CD4-positive, alpha-beta T cell (primary cell): ENCODE measurements at regions of chr10 and their contacts with region 1.

Region 1: GRCh38 chr10:101782811-101783735 is at the start of gene NPM3:
- DNase-seq: peak; percentile 61 to 87 (median 76)
- ATAC-seq: peak; percentile 81
- H3K4me3 ChIP-seq: peak within 1 kb of the TSS; percentile 90
- H3K4me3 Mint-ChIP-seq: peak within 1 kb of the TSS; percentile 100
- H3K27ac ChIP-seq: peak within 1 kb of the TSS; percentile 62 to 64
- H3K27ac Mint-ChIP-seq: peak within 1 kb of the TSS; percentile 86
- H3K4me1 ChIP-seq: peaks cover 62% of the 10 kb centered on the region
- H3K4me1 Mint-ChIP-seq: peaks cover 71% of the 10 kb centered on the region
- H3K27me3 ChIP-seq: peaks cover 15 to 16% of the 10 kb centered on the region in 2 experiments
- H3K27me3 Mint-ChIP-seq: peaks cover 11% of the 10 kb centered on the region
- CTCF ChIP-seq: no peak
- total RNA-seq, gene NPM3: 15.5 to 15.8 TPM

Region 2: GRCh38 chr10:101602761-101603398 is 180.2 kb before region 1 on chr10:
- CTCF ChIA-PET with region 1: interaction called, 3 read pairs
- POLR2A ChIA-PET with region 1: no interaction called
- intact Hi-C with region 1: loop called (anchors 2 kb)
- DNase-seq: peak; percentile 12 to 72 (median 48)
- ATAC-seq: peak; percentile 84
- H3K4me3 ChIP-seq: no peak overlapping the region
- H3K4me3 Mint-ChIP-seq: no peak overlapping the region
- H3K27ac ChIP-seq: no peak overlapping the region
- H3K27ac Mint-ChIP-seq: no peak overlapping the region
- H3K4me1 ChIP-seq: no peaks in the 10 kb centered on the region
- H3K4me1 Mint-ChIP-seq: no peaks in the 10 kb centered on the region
- H3K27me3 ChIP-seq: no peaks in the 10 kb centered on the region
- H3K27me3 Mint-ChIP-seq: no peaks in the 10 kb centered on the region
- CTCF ChIP-seq: peak; percentile 66

Region 3: DNA sequence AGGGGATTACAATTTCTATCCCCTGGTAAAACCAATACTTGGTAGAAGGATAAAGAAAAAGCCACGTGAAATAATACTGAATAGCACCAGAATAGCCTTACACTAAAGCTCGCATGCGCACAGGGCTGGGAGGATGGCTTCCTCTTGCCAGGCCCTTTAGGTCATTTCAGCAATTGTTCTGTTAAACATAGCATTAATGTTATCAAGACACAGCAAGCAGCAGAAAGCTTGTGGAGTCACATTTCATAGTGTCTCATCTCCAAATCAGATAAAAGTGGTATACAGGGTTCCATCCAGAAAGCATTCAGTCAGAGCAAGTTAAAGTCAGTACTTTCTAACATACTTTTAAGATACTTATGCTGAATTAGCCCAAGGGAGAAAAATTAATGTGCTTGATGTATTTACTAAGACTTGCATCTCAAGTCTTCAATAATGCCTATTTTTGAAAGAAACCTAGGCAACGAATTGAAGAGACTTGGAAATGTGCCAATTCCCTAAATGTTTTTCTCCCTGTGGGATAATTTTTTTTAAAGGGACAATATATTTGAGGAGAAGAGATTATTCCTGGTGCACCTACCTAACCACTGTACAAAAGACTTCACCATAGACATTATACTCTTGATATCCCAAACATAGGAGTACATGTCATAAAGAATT is 14.5 kb after region 1 on chr10:
- CTCF ChIA-PET with region 1: interaction called, 7 read pairs
- POLR2A ChIA-PET with region 1: interaction called, 20 read pairs
- intact Hi-C with region 1: no loop called
- DNase-seq: no peak
- ATAC-seq: no peak
- H3K4me3 ChIP-seq: no peak overlapping the region
- H3K4me3 Mint-ChIP-seq: no peak overlapping the region
- H3K27ac ChIP-seq: no peak overlapping the region
- H3K27ac Mint-ChIP-seq: peak overlapping the region; percentile 10
- H3K4me1 ChIP-seq: no peaks in the 10 kb centered on the region
- H3K4me1 Mint-ChIP-seq: peaks cover 52% of the 10 kb centered on the region
- H3K27me3 ChIP-seq: no peaks in the 10 kb centered on the region
- H3K27me3 Mint-ChIP-seq: no peaks in the 10 kb centered on the region
- CTCF ChIP-seq: no peak

Region 4: DNA sequence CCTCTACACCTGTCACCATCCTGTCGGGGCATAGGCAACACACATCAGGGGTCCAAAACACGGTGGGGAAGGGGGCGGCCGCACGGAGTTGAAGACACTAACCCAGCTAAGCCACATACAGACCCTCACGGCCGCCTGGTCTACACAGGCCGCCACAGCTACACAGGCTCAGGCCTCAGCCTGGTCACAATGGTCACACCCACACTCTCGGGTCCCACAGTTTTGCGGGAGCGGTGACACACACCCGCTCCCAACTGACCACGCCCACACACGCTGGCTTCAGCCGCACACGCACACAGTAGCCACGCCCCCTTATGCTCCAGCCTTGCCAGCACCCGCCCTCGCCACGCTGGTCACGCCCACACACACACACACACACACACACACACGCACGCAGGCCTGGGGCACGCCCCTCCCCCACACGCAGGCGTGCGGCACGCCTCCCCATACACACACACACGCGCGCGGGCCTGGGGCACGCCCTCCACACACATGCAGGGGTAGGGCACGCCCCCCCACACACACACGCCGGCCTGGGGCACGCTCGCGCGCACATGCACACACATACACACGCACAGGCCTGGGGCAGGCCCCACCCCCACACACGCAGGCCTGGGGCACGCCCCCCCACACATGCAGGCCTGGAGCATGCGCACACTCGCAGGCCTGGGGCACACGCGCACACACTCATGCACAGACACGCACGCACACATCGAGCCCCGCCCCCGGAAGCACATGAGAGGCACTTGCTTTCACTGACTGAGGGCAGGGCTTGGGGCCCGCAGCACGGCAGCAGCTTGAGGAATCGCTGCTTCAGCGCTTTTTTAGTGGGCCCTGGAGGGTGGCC is 47.5 kb after region 1 on chr10:
- CTCF ChIA-PET with region 1: interaction called, 3 read pairs
- POLR2A ChIA-PET with region 1: interaction called, 3 read pairs
- intact Hi-C with region 1: loop called (anchors 5 kb)
- DNase-seq: peak; percentile 91 to 99 (median 94)
- ATAC-seq: peak; percentile 79
- H3K4me3 ChIP-seq: peak overlapping the region; percentile 63
- H3K4me3 Mint-ChIP-seq: peak overlapping the region; percentile 94
- H3K27ac ChIP-seq: peak overlapping the region; percentile 76 to 85
- H3K27ac Mint-ChIP-seq: peak overlapping the region; percentile 99
- H3K4me1 ChIP-seq: peaks cover 69% of the 10 kb centered on the region
- H3K4me1 Mint-ChIP-seq: peaks cover 55% of the 10 kb centered on the region
- H3K27me3 ChIP-seq: no peaks in the 10 kb centered on the region
- H3K27me3 Mint-ChIP-seq: peaks cover 5% of the 10 kb centered on the region
- CTCF ChIP-seq: no peak

Region 5: DNA sequence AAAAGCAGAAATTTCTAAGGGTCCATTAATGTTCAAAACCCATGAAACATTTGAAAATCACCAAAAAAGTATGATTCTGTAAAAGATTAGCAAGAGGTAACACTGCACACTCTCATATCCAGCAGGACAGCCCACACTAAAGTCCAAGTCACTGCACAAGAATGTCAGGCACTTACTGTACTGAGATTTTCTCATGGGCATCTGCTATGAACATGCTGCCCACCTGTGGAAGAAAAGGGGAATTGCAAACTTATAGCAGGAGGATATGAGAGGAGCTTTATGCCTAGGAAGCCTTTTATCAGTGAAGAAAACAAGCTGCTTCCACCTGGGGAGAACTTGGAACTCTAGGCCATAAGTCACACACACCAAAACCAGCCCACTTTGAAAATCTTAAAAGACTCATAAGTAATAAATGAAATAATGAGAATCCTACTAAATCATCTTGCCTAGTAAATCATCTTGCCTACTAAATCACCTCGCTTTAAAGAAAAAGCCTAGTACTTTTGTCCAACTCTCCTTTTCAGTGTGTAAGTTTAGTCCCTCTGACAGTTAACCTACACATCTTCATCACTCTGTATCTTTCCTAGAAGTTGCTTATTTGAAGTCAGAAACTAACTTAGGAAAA is 226.8 kb after region 1 on chr10:
- CTCF ChIA-PET with region 1: interaction called, 6 read pairs
- POLR2A ChIA-PET with region 1: no interaction called
- intact Hi-C with region 1: loop called in 1 of 2 experiments (anchors 5 kb)
- DNase-seq: peak in 10 of 14 experiments; percentile 2 to 74 (median 23)
- ATAC-seq: peak; percentile 91
- H3K4me3 ChIP-seq: no peak overlapping the region
- H3K4me3 Mint-ChIP-seq: no peak overlapping the region
- H3K27ac ChIP-seq: no peak overlapping the region
- H3K27ac Mint-ChIP-seq: peak overlapping the region; percentile 0
- H3K4me1 ChIP-seq: no peaks in the 10 kb centered on the region
- H3K4me1 Mint-ChIP-seq: peaks cover 5% of the 10 kb centered on the region
- H3K27me3 ChIP-seq: no peaks in the 10 kb centered on the region
- H3K27me3 Mint-ChIP-seq: no peaks in the 10 kb centered on the region
- CTCF ChIP-seq: peak; percentile 74